ENCODE measurements at regions of chr7 and their contacts with region 1.

Region 1: DNA sequence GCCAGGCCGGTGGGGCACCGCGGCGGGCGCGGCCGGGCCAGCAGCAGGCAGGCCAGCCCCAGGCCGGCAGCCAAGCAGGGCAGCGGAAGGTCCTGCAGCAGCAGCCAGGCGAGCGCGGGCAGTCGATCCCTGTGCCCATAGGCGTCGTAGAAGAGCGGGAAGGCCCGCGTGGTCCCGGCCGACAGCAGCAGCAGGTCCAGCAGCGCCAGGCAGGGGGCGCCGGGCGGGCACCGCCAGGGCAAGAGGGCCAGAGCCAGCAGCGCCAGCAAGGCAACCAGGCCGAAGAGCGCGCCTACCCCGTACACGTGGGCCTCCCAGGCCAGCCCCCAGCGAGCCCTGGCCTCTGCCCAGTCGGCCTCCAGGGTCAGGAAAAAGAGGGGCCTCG is 8.4 kb upstream of the RBM28 start:
- DNase-seq: peak in 3 of 4 donors; percentile 44 to 89 (median 55)
- ATAC-seq: peak; percentile 84
- H3K4me3 ChIP-seq: no peak overlapping the region
- H3K27ac ChIP-seq: no peak overlapping the region
- H3K4me1 ChIP-seq: peaks cover 0 to 17% of the 10 kb centered on the region in 2 donors
- H3K27me3 ChIP-seq: peaks cover 26 to 64% of the 10 kb centered on the region in 2 donors
- CTCF ChIP-seq: peak; percentile 31 to 57

Region 2: GRCh38 chr7:128387216-128388144 is 35.3 kb after region 1 on chr7:
- intact Hi-C with region 1: loop called in 1 of 2 experiments (anchors 5 kb)
- DNase-seq: peak; percentile 65 to 87 (median 80)
- ATAC-seq: peak; percentile 92
- H3K4me3 ChIP-seq: no peak overlapping the region
- H3K27ac ChIP-seq: no peak overlapping the region
- H3K4me1 ChIP-seq: peaks cover 0 to 11% of the 10 kb centered on the region in 2 donors
- H3K27me3 ChIP-seq: peaks cover 0 to 13% of the 10 kb centered on the region in 2 donors
- CTCF ChIP-seq: peak; percentile 72 to 90

Measured in left lung (tissue), 14 donors.